ENCODE measurements at regions of chr1 and their contacts with region 1.

Region 1: GRCh38 chr1:241519308-241520079 is at the start of gene FH:
- DNase-seq: peak; percentile 96 to 98 (median 97)
- ATAC-seq: peak; percentile 100
- H3K4me3 ChIP-seq: peak within 1 kb of the TSS; percentile 86
- H3K27ac ChIP-seq: peak within 1 kb of the TSS; percentile 77
- H3K4me1 ChIP-seq: no peaks in the 10 kb centered on the region
- H3K27me3 ChIP-seq: no peaks in the 10 kb centered on the region
- total RNA-seq, gene FH: 149 to 188 (median 165) TPM

Region 2: GRCh38 chr1:241362349-241362748 is 157.1 kb before region 1 on chr1:
- intact Hi-C with region 1: no loop called
- DNase-seq: no peak
- ATAC-seq: no peak
- H3K4me3 ChIP-seq: no peak overlapping the region
- H3K27ac ChIP-seq: no peak overlapping the region
- H3K4me1 ChIP-seq: no peaks in the 10 kb centered on the region
- H3K27me3 ChIP-seq: no peaks in the 10 kb centered on the region

Region 3: GRCh38 chr1:241482761-241483250 is 36.7 kb before region 1 on chr1:
- intact Hi-C with region 1: no loop called
- DNase-seq: no peak
- ATAC-seq: no peak
- H3K4me3 ChIP-seq: no peak overlapping the region
- H3K27ac ChIP-seq: no peak overlapping the region
- H3K4me1 ChIP-seq: no peaks in the 10 kb centered on the region
- H3K27me3 ChIP-seq: no peaks in the 10 kb centered on the region

Region 4: DNA sequence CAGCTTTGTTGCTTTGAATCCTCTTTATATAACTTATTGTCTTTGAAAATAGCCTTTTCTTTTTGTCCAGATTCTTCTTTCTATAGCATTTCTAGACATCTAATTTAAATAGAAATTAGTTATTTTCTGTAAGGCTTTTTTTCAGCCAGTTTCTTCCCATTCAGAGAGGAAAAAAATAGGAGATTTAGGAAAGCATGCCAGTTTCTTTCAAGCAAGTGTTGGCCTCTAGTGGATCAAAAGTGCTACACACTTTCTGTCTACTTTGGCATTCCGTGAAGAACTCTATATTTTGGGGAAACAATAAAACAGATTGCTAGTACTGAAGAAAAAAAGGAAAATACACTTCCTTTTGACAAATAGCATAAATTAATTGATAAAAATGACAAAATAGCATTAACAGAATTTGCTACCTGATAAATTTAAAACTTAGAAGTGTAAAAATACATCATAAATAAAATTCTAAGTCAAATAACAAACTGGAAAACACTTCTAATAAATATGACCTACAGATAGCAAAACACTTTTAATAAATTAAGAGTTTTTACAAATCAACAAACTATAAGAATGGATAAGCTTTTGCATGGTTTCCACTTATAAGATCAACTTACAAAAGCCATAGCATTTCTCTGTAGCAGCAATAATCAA is 315.4 kb after region 1 on chr1:
- intact Hi-C with region 1: loop called in 1 of 4 experiments (anchors 10 kb)
- DNase-seq: no peak
- ATAC-seq: peak in 1 of 2 donors; percentile 50
- H3K4me3 ChIP-seq: no peak overlapping the region
- H3K27ac ChIP-seq: no peak overlapping the region
- H3K4me1 ChIP-seq: no peaks in the 10 kb centered on the region
- H3K27me3 ChIP-seq: no peaks in the 10 kb centered on the region

Measured in right cardiac atrium (tissue), 5 donors.